ENCODE measurements at regions of chr16 and their contacts with region 1.

Region 1: DNA sequence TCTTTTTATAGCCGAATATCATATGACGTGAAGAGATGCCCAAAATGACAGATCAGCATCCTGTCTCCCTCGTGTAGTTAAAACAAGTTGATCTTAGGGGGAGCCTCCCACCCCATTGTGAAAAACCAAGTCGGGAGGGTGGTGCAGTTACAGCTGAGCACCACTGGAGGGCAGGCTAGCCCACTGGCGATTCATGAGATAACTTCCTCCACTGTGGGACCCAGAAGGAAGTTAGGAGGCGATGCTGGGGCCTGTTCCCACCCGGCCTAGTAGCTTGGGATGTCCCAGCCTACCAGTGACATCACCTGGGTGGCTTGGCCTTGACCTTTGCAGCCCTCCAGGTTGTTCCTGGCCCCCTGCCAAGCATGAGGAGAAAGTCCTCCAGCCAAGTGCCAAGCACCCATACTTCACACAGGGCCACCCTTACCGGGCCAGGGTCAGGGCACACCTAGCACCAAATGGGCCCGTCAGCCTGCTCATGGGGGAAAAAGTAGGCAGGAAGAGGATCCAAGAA is 8.1 kb upstream of the CPNE2 start:
- DNase-seq: peak; percentile 70
- ATAC-seq: peak; percentile 76 to 87

Region 2: GRCh38 chr16:57152096-57153093 is 68.1 kb after region 1 on chr16:
- intact Hi-C with region 1: no loop called
- DNase-seq: no peak
- ATAC-seq: no peak

Region 3: DNA sequence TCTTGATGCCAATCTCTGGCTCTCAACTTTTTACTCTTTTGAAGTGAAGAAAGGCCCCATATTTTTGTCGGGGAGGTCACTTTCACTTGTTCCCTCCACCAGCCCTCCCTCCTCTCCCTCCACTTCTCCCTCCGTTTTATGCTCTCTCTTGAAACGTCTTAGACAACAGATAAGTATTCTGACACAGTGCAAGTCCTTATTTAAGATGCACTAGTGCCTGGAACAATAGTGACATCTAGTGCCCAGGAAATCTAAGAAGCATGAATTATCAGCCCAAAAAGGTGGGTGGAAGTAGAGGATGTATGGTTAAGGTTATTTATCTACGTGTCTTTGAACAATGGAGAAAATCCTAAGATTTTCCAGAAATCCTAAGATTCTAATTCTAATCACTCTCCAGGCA is 83.6 kb after region 1 on chr16:
- intact Hi-C with region 1: loop called (anchors 1 to 2 kb)
- DNase-seq: no peak
- ATAC-seq: peak; percentile 80

Region 4: GRCh38 chr16:57413301-57413730 is 329.0 kb after region 1 on chr16:
- intact Hi-C with region 1: loop called (anchors 1 to 10 kb)
- DNase-seq: no peak
- ATAC-seq: no peak

Region 5: GRCh38 chr16:57422026-57422944 is 338.0 kb after region 1 on chr16:
- intact Hi-C with region 1: loop called (anchors 1 to 10 kb)
- DNase-seq: peak; percentile 62
- ATAC-seq: peak; percentile 60 to 78

Measured in left cardiac atrium (tissue), 4 donors.